ENCODE measurements at regions of chr3 and their contacts with region 1.

Region 1: GRCh38 chr3:58025837-58026569 is 17.8 kb downstream of the FLNB start:
- DNase-seq: peak; percentile 71 to 87
- H3K4me3 ChIP-seq: peak overlapping the region in 1 of 4 donors; percentile 19
- H3K27ac ChIP-seq: peak overlapping the region; percentile 67 to 81 (median 74)
- H3K4me1 ChIP-seq: peaks cover 30 to 73% (median 46%) of the 10 kb centered on the region in 4 donors
- H3K27me3 ChIP-seq: no peaks in the 10 kb centered on the region
- CTCF ChIP-seq: no peak
- EP300 ChIP-seq: no peak
- POLR2A ChIP-seq: no peak

Region 2: GRCh38 chr3:58073301-58074108 is 47.5 kb after region 1 on chr3:
- intact Hi-C with region 1: loop called (anchors 10 kb)
- DNase-seq: no peak
- H3K4me3 ChIP-seq: no peak overlapping the region
- H3K27ac ChIP-seq: peak overlapping the region in 4 of 5 donors; percentile 9 to 78 (median 65)
- H3K4me1 ChIP-seq: peaks cover 37 to 80% (median 58%) of the 10 kb centered on the region in 4 donors
- H3K27me3 ChIP-seq: no peaks in the 10 kb centered on the region
- CTCF ChIP-seq: no peak
- EP300 ChIP-seq: no peak
- POLR2A ChIP-seq: no peak